GM10248 (cell line): ENCODE measurements at regions of chr17 and their contacts with region 1.

Region 1: DNA sequence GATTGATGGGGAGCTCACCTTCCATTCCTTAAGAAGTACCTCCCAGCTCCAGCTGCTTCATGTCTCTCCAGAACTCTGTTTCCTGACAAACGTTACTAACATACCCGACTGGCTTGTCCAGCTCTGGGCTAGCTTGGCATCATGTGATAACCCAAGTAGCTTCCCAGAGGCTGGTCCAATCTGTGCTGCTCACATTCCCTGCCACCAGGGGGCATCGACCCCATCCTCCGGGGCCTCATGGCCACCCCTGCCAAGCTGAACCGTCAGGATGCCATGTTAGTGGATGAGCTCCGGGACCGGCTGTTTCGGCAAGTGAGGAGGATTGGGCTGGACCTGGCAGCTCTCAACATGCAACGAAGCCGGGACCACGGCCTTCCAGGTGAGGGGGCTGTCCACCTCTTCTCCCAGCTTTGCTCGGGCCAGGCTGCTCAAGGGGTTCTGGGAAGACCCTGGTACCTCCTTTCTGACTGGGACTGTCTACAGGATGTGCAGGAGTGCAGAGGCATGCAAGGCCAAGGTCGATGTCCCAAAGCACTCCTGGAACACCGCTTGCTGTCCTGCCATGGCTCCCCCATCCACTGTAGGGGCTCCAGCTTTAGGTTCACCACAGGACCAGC is 7.6 kb downstream of the EPX start:
- DNase-seq: peak; percentile 72
- CTCF ChIP-seq: peak; percentile 74

Region 2: DNA sequence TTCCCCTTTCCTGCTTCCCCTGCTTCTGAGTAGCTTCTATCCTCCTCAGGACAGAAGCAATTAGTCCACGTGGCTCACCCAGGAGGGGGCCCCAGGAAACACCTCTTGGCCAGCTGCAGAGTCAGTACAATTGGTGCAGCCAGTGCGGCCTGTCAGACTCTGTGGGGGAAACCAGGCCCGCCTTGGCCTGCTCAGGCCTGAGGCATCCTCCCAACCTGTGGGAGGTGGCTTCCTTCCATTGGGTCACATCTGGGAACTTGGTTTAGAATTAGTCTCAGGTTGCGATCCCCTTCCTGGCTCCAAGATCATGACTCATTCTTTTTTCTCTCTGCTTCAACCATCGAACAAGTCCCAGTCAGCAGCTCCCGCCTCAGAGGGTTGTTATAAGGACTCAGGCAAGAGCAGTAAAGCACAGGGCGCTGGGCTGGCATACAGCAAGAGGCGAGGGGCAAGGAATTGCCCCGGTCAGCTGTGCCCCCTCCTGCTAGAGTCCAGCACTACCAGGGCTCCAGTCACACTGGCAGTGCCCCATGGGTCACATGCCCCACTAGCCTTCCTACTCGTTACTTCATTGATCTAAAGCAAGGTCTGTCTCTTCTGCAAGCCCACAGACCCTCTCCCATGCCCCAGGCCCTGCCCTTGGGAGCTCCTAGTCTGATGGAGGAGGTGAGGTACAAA is 15.7 kb before region 1 on chr17:
- CTCF ChIA-PET with region 1: interaction called, 38 read pairs
- POLR2A ChIA-PET with region 1: no interaction called
- DNase-seq: no peak
- CTCF ChIP-seq: no peak

Region 3: GRCh38 chr17:58210922-58211321 is 10.8 kb after region 1 on chr17:
- CTCF ChIA-PET with region 1: interaction called, 77 read pairs
- POLR2A ChIA-PET with region 1: no interaction called
- DNase-seq: no peak
- CTCF ChIP-seq: peak; percentile 21

Region 4: GRCh38 chr17:58232707-58233156 is 32.6 kb after region 1 on chr17:
- CTCF ChIA-PET with region 1: interaction called, 14 read pairs
- POLR2A ChIA-PET with region 1: no interaction called
- DNase-seq: peak; percentile 76
- CTCF ChIP-seq: no peak

Region 5: DNA sequence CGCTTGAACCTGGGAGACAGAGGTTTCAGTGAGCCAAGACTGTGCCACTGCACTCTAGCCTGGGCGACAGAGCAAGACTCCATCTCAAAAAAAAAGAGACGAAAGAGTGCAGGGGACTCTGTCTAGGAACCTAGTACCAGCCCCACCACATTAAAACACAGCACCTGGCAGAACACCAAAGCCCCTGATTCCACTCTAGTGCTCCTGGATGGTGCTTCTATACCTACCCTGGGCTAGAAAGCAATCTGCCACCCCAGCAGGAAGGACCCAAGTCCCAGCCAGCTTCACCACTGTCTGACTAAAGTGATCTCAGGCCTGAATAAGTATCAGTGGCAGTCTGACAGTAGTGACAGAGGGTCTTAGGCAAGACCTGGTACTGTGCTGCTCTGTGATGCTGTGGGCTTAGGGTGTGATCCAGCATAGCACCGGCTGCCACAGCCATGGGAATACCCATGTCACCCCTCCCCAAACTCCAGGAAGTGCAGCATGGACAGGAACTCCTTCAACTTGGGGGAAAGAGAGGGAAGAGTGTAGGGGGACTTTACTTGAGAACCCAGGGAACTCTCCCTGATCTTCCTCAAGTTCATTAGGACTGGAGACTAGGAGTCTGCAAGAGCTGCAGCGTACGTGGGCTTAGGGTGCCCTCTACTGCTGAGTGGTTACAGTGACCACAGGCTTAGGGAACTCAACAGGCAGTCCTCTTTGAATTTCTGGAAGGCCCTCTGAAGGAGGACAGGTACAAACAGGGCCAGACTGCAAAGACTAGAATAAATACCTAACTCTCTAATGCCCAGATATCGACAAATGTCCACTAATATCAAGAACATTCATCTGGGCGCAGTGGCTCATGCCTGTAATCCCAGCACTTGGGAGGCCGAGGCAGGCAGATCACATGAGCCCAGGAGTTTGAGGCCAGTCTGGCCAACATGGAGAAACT is 247.2 kb after region 1 on chr17:
- CTCF ChIA-PET with region 1: interaction called, 23 read pairs
- POLR2A ChIA-PET with region 1: no interaction called
- DNase-seq: peak; percentile 70
- CTCF ChIP-seq: peak; percentile 89